Activated CD8-positive, alpha-beta T cell treated with anti-CD3 and anti-CD28 coated beads for 36 hours (primary cell): ENCODE measurements at regions of chr19 and their contacts with region 1.

Region 1: GRCh38 chr19:47157431-47158321 is 27.0 kb downstream of the SAE1 start:
- DNase-seq: peak; percentile 60
- ATAC-seq: peak; percentile 18
- H3K4me3 Mint-ChIP-seq: peak overlapping the region; percentile 40
- H3K27ac Mint-ChIP-seq: peak overlapping the region; percentile 86
- H3K4me1 Mint-ChIP-seq: peaks cover 65% of the 10 kb centered on the region
- H3K27me3 Mint-ChIP-seq: no peaks in the 10 kb centered on the region
- CTCF ChIP-seq: no peak

Region 2: DNA sequence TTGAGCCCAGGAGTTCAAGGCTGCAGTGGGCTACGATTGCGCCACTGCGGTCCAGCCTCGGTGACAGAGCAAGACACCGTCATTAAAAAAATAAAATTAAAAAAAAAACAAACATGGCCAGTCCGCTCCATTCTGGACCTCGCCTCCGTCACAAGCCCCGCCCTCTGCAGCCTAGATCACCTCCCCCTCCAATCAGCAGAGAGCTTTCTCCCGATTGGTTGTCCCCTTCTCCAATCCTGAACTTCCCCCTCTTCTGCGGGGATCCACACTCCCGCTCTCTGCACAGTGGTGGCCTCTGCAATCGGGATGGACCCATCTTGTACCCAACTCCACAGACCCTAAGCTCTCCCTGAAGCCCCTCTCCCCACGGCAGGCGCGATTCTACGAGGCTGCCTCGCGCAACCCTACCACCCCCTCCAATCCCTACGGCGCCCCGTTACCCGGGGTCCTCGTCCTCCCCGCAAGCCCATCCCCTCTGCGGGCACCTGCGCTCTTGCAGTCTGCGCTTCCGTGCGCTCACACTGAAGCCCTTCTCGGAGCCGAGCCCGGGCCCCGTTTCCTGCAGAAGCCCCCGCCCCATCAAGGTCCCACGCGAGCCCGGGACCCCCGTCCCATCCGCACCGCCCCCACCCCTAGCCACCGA is 109.8 kb before region 1 on chr19:
- CTCF ChIA-PET with region 1: no interaction called
- POLR2A ChIA-PET with region 1: no interaction called
- intact Hi-C with region 1: no loop called
- DNase-seq: peak; percentile 93
- ATAC-seq: peak; percentile 69
- H3K4me3 Mint-ChIP-seq: peak overlapping the region; percentile 99
- H3K27ac Mint-ChIP-seq: peak overlapping the region; percentile 90
- H3K4me1 Mint-ChIP-seq: peaks cover 12% of the 10 kb centered on the region
- H3K27me3 Mint-ChIP-seq: no peaks in the 10 kb centered on the region
- CTCF ChIP-seq: no peak

Region 3: GRCh38 chr19:47143322-47144073 is 14.2 kb before region 1 on chr19:
- CTCF ChIA-PET with region 1: interaction called, 12 read pairs
- POLR2A ChIA-PET with region 1: interaction called, 8 read pairs
- intact Hi-C with region 1: no loop called
- DNase-seq: no peak
- ATAC-seq: peak; percentile 29
- H3K4me3 Mint-ChIP-seq: no peak overlapping the region
- H3K27ac Mint-ChIP-seq: no peak overlapping the region
- H3K4me1 Mint-ChIP-seq: peaks cover 53% of the 10 kb centered on the region
- H3K27me3 Mint-ChIP-seq: no peaks in the 10 kb centered on the region
- CTCF ChIP-seq: no peak

Region 4: GRCh38 chr19:47168065-47168464 is 10.4 kb after region 1 on chr19:
- CTCF ChIA-PET with region 1: interaction called, 5 read pairs
- POLR2A ChIA-PET with region 1: interaction called, 11 read pairs
- intact Hi-C with region 1: no loop called
- DNase-seq: no peak
- ATAC-seq: no peak
- H3K4me3 Mint-ChIP-seq: no peak overlapping the region
- H3K27ac Mint-ChIP-seq: no peak overlapping the region
- H3K4me1 Mint-ChIP-seq: peaks cover 10% of the 10 kb centered on the region
- H3K27me3 Mint-ChIP-seq: no peaks in the 10 kb centered on the region
- CTCF ChIP-seq: no peak

Region 5: DNA sequence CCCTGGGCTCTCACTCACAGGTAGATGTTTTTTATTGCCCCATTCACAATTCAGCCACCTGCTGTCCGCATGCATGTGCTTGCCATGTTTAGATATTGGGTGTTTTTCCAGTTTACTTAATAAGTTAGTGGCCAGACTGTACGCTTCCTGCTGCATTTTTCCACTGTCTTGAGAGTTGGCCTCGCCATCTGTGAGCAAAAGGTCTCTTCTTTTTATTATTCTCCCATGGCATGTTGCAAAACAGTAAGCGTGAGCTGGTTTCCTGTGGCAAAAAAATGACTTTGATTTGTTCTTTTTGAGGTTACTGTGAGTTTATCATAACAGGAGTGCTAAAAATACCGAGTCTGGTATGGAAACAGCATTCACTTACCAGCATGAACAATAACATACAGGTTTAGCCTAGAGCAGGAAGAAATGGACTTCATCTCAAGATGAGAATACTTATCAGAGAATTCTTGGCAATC is 19.0 kb after region 1 on chr19:
- CTCF ChIA-PET with region 1: interaction called, 14 read pairs
- POLR2A ChIA-PET with region 1: interaction called, 15 read pairs
- intact Hi-C with region 1: no loop called
- DNase-seq: peak; percentile 62
- ATAC-seq: peak; percentile 79
- H3K4me3 Mint-ChIP-seq: peak overlapping the region; percentile 26
- H3K27ac Mint-ChIP-seq: peak overlapping the region; percentile 89
- H3K4me1 Mint-ChIP-seq: peaks cover 62% of the 10 kb centered on the region
- H3K27me3 Mint-ChIP-seq: no peaks in the 10 kb centered on the region
- CTCF ChIP-seq: no peak

Region 6: DNA sequence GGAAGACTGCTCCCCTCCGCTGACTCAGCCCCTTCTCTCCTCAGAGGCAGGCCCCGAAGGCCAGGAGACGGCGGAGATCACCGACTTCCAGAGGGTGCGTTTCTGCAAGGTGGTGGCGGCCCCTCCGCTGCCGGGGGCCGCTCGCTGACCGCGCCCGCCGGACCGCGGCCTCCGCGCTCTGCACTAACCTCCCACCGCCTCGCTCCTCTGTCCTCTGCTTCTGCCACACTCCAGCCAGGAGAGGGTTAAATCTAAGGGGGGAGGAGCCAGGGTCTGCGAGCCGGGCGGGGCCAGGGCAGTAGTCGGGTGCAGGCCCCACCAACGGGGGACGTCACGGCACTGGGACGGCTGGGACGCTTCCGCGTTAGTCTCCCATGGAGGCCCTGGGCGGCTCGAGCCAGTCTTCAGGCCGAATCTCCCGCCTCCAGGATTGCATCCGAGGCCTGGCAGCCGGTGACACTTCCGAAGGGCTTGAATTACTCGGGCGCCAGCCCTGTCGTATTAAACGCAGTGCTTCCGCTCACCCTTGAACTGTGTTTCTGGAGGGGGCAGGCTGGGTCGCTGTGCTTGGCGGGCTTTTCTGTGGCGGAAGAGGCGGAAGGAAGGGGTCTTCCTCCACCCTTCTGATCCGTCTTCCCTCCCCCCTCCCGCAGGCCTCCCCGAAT is 115.8 kb after region 1 on chr19:
- CTCF ChIA-PET with region 1: no interaction called
- POLR2A ChIA-PET with region 1: no interaction called
- intact Hi-C with region 1: no loop called
- DNase-seq: peak; percentile 93
- ATAC-seq: peak; percentile 69
- H3K4me3 Mint-ChIP-seq: peak overlapping the region; percentile 92
- H3K27ac Mint-ChIP-seq: peak overlapping the region; percentile 99
- H3K4me1 Mint-ChIP-seq: peaks cover 26% of the 10 kb centered on the region
- H3K27me3 Mint-ChIP-seq: no peaks in the 10 kb centered on the region
- CTCF ChIP-seq: no peak